IMR-90 (cell line): ENCODE measurements at regions of chr2 and their contacts with region 1.

Region 1: DNA sequence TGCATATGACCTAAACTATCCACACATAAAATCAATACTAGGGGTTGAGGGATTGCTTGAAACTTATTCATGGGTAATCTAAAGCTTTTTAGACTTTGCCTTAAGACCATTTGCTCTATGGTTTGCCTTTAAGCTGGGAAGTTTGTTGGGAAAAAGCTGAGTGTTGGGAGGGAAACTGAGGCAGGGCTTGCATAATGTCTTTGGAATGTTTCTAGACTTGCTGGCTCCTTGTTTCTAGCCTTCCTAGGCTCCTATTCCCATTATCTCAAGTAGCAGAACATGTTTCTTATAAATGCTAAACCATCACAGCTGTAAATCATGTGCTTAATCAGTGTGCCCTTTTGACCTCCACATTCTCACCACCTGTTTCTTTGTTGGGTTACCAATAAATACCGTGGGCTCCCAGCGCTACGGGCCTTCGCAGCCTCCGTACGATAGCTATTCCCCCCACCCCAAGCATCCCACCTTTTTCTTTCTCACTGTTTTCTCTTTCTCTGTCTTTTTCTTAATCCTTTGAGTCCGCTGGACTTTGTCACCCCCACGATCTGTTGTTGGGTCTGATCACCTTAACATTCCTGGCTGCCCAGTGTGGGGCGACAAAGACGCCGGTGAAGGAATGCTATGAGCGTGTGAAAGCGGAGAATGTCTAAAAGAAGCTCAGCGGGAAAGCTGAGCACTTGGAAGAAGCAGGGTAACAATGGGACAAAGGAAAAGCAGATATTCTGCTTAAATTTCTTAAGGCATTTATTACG is 49.4 kb upstream of the CWC22 start:
- DNase-seq: no peak
- ATAC-seq: no peak
- H3K4me3 ChIP-seq: no peak overlapping the region
- H3K27ac ChIP-seq: no peak overlapping the region
- H3K4me1 ChIP-seq: no peaks in the 10 kb centered on the region
- H3K27me3 ChIP-seq: no peaks in the 10 kb centered on the region; the same call in none of the 2 replicates
- CTCF ChIP-seq: no peak
- POLR2A ChIP-seq: no peak
- RAD21 ChIP-seq: no peak

Region 2: DNA sequence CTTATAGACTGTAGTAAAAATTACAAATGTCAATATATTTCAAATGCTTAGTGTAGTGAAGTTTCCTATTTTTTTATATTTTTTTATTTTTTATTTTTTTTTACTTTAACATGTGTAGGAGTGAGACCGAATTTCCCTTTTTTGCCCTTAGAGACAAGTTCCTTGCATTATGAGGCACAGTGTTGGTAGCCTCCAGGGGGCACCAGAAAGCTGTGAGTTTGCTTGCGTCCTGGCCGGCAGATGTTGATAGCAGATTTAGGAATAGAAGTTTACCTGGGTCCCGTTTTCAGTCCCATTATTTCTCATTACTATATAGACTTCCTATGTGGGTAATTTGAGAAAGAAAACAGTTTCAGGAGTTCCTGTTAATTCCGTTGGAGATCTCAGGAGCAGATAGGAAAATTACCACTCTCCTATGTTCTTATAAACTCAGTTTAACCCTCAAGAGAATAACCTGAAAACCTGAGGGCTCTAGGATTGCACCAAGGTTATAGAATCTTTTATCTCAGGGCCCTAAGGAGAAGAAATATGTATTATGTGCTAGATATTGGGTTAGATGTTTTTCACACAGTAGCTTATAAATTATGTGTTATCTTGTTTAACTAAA is 634.4 kb before region 1 on chr2:
- CTCF ChIA-PET with region 1: no interaction called
- POLR2A ChIA-PET with region 1: no interaction called
- dilution Hi-C with region 1: no loop called
- in situ Hi-C with region 1: loop called (anchors 25 kb)
- intact Hi-C with region 1: no loop called
- DNase-seq: peak; percentile 77
- ATAC-seq: peak; percentile 89
- H3K4me3 ChIP-seq: no peak overlapping the region
- H3K27ac ChIP-seq: no peak overlapping the region
- H3K4me1 ChIP-seq: no peaks in the 10 kb centered on the region
- H3K27me3 ChIP-seq: no peaks in the 10 kb centered on the region
- CTCF ChIP-seq: peak; percentile 89
- POLR2A ChIP-seq: no peak
- RAD21 ChIP-seq: peak; percentile 93

Region 3: DNA sequence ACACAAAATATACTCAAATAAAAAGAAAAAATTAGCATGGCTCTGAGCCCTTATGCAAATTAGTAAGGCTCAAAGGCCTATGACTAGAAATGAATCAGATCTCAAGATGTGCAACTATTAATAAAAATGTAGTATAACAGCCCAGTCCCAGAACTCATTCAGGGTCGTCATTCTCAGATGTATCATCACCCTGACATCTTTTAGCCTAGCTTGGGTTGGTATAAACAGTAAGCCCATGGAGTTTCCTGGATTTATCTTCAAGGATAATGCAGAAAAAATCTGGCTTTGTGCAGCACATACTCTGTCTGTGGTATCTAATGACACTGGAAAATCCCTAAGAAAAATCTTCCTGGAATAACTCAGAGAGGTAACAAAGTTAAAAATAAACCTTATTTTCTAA is 434.4 kb before region 1 on chr2:
- CTCF ChIA-PET with region 1: no interaction called
- POLR2A ChIA-PET with region 1: no interaction called
- dilution Hi-C with region 1: no loop called
- in situ Hi-C with region 1: no loop called
- intact Hi-C with region 1: no loop called
- DNase-seq: peak; percentile 81
- ATAC-seq: peak; percentile 59
- H3K4me3 ChIP-seq: no peak overlapping the region
- H3K27ac ChIP-seq: no peak overlapping the region
- H3K4me1 ChIP-seq: peaks cover 3% of the 10 kb centered on the region; the same call in 1 of the 2 replicates
- H3K27me3 ChIP-seq: no peaks in the 10 kb centered on the region
- CTCF ChIP-seq: no peak
- POLR2A ChIP-seq: no peak
- RAD21 ChIP-seq: no peak